ENCODE measurements at regions of chr18 and their contacts with region 1.

Region 1: DNA sequence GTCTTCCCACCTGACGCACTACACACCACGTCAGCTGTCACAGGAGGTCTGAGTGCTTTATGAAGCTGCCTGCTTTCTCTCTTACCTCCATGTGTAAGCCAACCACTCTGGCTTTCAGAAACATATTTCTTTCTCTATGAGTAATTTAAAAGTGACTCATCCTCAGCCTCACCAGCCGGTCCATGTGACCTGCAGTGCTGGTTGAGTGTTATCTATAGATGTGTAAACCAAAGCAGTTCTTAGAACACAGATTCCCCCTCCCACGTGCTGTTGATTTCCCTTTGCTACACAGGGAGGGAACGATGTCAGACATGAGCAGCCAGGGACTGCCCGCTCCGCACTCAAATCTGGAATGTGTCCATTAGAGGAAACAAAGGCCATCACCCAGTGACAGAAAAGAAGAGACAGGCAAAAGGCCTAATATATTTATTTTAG is 157.8 kb downstream of the BCL2 start:
- DNase-seq: peak; percentile 80
- H3K4me3 Mint-ChIP-seq: peak overlapping the region; percentile 83
- H3K27ac Mint-ChIP-seq: peak overlapping the region; percentile 99
- H3K4me1 Mint-ChIP-seq: peaks cover 92% of the 10 kb centered on the region
- H3K27me3 Mint-ChIP-seq: no peaks in the 10 kb centered on the region

Region 2: GRCh38 chr18:62828852-62829251 is 332.9 kb before region 1 on chr18:
- intact Hi-C with region 1: no loop called
- DNase-seq: no peak
- H3K4me3 Mint-ChIP-seq: no peak overlapping the region
- H3K27ac Mint-ChIP-seq: no peak overlapping the region
- H3K4me1 Mint-ChIP-seq: peaks cover 8% of the 10 kb centered on the region
- H3K27me3 Mint-ChIP-seq: peaks cover 1% of the 10 kb centered on the region

Region 3: DNA sequence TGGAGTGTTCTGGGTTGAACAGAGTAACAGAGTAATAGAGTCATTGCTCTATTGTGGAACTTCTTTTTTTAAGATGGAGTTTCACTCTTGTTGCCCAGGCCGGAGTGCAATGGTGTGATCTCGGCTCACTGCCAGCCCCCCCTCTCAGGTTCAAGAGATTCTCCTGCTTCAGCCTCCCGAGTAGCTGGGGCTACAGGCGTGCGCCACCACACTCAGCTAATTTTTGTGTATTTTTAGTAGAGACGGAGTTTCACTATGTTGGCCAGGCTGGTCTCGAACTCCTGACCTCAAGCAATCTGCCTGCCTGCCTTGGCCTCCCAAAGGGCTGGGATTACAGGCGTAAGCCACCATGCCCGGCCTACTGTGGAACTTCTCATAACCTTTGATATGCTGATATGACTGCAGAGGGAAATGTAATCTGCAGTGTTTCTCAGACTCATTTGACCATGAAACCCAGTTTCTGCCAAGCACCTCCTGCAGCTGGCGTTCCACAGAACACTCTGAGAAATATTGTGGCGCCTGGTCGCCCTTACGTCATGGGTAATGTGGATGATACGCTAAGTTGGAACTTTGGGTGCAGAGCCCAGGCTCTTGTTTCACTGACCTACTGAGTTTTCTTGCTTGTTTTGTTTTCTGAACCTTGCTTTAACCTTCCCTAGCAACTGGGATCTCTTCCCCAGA is 56.0 kb before region 1 on chr18:
- intact Hi-C with region 1: loop called (anchors 1 kb)
- DNase-seq: no peak
- H3K4me3 Mint-ChIP-seq: no peak overlapping the region
- H3K27ac Mint-ChIP-seq: no peak overlapping the region
- H3K4me1 Mint-ChIP-seq: peaks cover 37% of the 10 kb centered on the region
- H3K27me3 Mint-ChIP-seq: peaks cover 20% of the 10 kb centered on the region

Region 4: DNA sequence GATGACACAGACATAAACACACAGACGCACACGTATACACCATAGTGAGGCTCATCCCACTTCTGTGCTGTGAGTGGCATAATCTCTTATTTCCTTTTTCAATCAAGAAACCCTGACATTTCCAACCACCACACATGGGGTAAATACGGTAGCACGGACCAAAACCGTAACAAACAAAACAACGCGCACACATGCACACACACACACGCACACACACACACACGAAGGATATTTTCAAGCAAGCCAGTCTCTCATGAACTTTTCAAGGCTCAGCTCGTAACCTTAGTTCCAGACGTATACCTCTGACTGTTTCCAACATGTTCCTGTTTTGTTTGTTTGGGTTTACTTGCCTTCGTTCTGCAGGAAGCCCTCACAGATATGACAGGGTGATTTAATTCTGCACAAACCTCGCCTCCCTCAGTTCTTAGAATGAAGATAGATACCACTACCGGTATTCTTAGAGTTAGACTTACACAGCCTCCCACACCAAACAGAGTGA is 38.0 kb after region 1 on chr18:
- intact Hi-C with region 1: loop called (anchors 1 kb)
- DNase-seq: peak; percentile 60
- H3K4me3 Mint-ChIP-seq: no peak overlapping the region
- H3K27ac Mint-ChIP-seq: no peak overlapping the region
- H3K4me1 Mint-ChIP-seq: peaks cover 25% of the 10 kb centered on the region
- H3K27me3 Mint-ChIP-seq: no peaks in the 10 kb centered on the region

Region 5: DNA sequence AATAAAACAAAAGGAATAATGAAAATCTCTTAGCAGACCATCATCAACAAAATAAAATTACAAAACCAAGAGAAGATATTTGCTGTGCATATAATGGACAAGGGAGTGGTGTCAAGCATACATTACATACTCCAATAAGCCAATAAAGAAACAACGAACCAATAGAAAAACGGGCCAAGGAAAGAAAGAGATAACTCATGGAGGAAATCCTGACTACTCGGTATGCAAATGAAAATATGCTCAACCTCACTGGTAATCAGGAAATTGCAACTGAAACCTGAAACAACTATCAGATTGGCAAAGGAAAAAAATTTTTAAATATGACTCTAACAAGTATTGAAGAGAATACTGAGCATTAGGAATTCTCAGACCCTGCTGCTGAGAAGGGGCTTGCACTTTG is 73.1 kb after region 1 on chr18:
- intact Hi-C with region 1: loop called (anchors 1 kb)
- DNase-seq: no peak
- H3K4me3 Mint-ChIP-seq: peak overlapping the region; percentile 2
- H3K27ac Mint-ChIP-seq: peak overlapping the region; percentile 70
- H3K4me1 Mint-ChIP-seq: peaks cover 76% of the 10 kb centered on the region
- H3K27me3 Mint-ChIP-seq: no peaks in the 10 kb centered on the region

Region 6: DNA sequence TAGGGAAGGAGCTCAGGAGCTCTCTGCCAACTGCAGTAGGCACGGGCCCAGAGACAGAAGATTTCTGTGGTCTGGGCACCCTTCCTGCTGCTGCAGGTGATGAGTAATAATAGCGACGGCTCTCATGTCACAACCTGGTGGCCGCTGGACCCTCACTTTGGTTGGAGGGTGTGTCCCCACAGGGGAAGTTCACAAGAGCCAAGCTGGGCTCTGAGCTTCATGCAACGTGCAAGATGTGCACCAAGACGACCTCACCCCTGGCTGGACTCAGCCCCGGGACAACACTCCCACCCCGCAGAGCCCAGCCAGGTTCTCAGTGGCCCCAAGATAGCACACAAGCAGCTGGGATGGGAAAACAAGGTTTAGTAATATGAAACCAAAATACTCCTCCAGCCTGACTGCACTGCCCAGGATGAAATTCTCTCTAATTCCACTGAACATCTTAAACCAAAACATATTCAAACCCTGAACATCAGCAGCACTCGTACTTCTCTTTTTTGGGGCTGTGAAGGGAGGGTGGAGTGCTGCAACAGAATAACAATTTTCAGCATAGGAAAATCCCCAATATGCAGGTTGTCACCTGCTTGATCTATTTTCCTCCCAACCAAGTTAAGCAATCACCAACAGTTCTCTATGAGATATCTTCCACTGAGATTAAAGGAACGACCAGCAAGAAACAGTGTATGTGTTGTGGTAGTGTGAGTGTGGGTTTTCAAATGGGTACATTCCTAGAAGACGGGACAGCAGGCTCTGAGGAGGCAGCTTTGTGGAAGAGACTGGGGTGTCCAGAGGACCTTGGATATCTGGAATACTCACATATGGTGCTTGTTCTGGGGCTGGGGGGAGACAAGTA is 131.3 kb after region 1 on chr18:
- intact Hi-C with region 1: loop called (anchors 2 kb)
- DNase-seq: no peak
- H3K4me3 Mint-ChIP-seq: peak overlapping the region; percentile 46
- H3K27ac Mint-ChIP-seq: peak overlapping the region; percentile 86
- H3K4me1 Mint-ChIP-seq: peaks cover 65% of the 10 kb centered on the region
- H3K27me3 Mint-ChIP-seq: no peaks in the 10 kb centered on the region

Region 7: GRCh38 chr18:63367053-63367953 is 205.5 kb after region 1 on chr18 and contains the start of gene KDSR:
- intact Hi-C with region 1: loop called (anchors 1 kb)
- DNase-seq: peak; percentile 82
- H3K4me3 Mint-ChIP-seq: peak within 1 kb of the TSS; percentile 93
- H3K27ac Mint-ChIP-seq: peak within 1 kb of the TSS; percentile 83
- H3K4me1 Mint-ChIP-seq: peaks cover 44% of the 10 kb centered on the region
- H3K27me3 Mint-ChIP-seq: no peaks in the 10 kb centered on the region
- total RNA-seq, gene KDSR: 72.2 and 83.5 TPM in 2 replicates

Region 8: DNA sequence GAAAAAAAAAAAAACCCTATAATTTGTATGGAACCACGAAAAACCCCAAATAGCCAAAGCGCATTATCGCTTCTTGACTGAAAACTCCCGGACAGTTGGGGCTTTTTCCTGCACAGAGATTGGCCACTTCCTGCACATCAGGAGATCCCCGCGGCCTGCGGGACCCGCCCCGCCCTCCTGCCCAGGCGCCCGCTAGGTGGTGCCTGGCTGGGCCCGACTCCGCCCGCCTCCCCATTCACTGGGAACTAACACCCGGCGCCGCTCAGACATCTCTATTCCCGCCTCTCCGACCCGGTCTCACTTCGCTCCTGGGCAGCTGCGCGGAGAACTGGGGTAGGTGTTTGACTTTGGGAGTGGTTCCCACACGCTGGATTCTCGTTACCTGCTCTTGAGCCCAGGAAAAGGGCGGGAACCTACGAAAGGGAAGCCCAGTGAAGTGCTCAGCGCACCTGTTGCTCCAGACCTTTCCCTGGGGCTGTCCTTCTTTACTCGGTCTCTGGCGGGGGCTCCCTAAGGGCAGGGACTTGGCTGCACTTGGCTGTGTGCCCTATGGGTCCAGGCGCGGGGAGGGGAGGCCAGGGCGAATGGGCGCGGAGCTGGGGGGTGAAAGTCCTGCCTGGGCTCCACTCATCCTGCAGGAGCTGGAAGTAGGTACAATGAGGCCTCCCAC is 787.4 kb after region 1 on chr18 and contains the start of gene HMSD:
- intact Hi-C with region 1: loop called (anchors 2 kb)
- DNase-seq: peak; percentile 68
- H3K4me3 Mint-ChIP-seq: peak within 1 kb of the TSS; percentile 88
- H3K27ac Mint-ChIP-seq: peak within 1 kb of the TSS; percentile 87
- H3K4me1 Mint-ChIP-seq: peaks cover 46% of the 10 kb centered on the region
- H3K27me3 Mint-ChIP-seq: peaks cover 5% of the 10 kb centered on the region
- total RNA-seq, gene HMSD: 19.7 and 27.8 TPM in 2 replicates

Measured in activated T-helper 1 cell treated with anti-CD3 and anti-CD28 coated beads, Interleukin-12 subunit alpha, Interleukin-12 subunit beta, Interleukin-2, Interleukin-4 antibody, amounts not matched to agents 30 ng/mL and 10 ng/mL and 1 ng/mL, durations not matched to agents 14 hours and 24 hours and 36 hours (primary cell).